ENCODE measurements at regions of chr14 and their contacts with region 1.

Region 1: GRCh38 chr14:105682940-105683570 is 156.7 kb downstream of the TMEM121 start:
- DNase-seq: peak; percentile 22
- H3K4me3 ChIP-seq: no peak overlapping the region
- H3K27ac ChIP-seq: no peak overlapping the region
- H3K4me1 ChIP-seq: no peaks in the 10 kb centered on the region
- H3K27me3 ChIP-seq: no peaks in the 10 kb centered on the region
- CTCF ChIP-seq: no peak
- EP300 ChIP-seq: no peak
- POLR2A ChIP-seq: no peak

Region 2: GRCh38 chr14:105944632-105945610 is 261.9 kb after region 1 on chr14:
- intact Hi-C with region 1: loop called (anchors 10 kb)
- DNase-seq: peak; percentile 65
- H3K4me3 ChIP-seq: no peak overlapping the region
- H3K27ac ChIP-seq: no peak overlapping the region
- H3K4me1 ChIP-seq: no peaks in the 10 kb centered on the region
- H3K27me3 ChIP-seq: no peaks in the 10 kb centered on the region
- CTCF ChIP-seq: peak; percentile 24 to 73 (median 52)
- EP300 ChIP-seq: no peak
- POLR2A ChIP-seq: no peak